PC-3 (cell line): ENCODE measurements at regions of chr5 and their contacts with region 1.

Region 1: GRCh38 chr5:17143335-17143734 is 74.1 kb upstream of the BASP1 start:
- DNase-seq: no peak
- ATAC-seq: no peak
- H3K4me3 ChIP-seq: no peak overlapping the region
- H3K27ac ChIP-seq: no peak overlapping the region
- H3K4me1 ChIP-seq: peaks cover 15% of the 10 kb centered on the region
- H3K27me3 ChIP-seq: no peaks in the 10 kb centered on the region
- CTCF ChIP-seq: no peak

Region 2: DNA sequence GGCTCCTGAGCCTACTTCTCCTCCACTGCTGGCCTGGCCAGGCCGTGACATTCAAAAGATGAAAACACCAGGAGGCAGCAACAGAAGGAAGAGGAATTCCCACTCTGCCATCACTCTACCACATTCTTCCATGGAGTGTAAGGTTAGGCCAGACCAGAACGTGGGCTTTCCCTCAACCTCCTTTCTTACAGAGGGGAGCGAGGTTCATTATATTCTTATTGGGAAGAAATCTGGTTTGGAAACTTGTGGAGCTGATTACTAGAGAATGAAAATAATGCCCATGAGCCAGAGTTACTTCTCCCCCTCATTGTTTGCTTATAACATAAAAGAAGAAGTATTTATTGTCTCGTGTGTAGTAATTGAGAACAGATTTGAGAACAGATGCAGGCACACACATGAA is 62.2 kb before region 1 on chr5:
- CTCF ChIA-PET with region 1: interaction called, 10 read pairs
- POLR2A ChIA-PET with region 1: no interaction called
- intact Hi-C with region 1: no loop called
- DNase-seq: no peak
- ATAC-seq: no peak
- H3K4me3 ChIP-seq: no peak overlapping the region
- H3K27ac ChIP-seq: no peak overlapping the region
- H3K4me1 ChIP-seq: no peaks in the 10 kb centered on the region
- H3K27me3 ChIP-seq: no peaks in the 10 kb centered on the region
- CTCF ChIP-seq: no peak